ENCODE measurements at regions of chr15 and their contacts with region 1.

Region 1: DNA sequence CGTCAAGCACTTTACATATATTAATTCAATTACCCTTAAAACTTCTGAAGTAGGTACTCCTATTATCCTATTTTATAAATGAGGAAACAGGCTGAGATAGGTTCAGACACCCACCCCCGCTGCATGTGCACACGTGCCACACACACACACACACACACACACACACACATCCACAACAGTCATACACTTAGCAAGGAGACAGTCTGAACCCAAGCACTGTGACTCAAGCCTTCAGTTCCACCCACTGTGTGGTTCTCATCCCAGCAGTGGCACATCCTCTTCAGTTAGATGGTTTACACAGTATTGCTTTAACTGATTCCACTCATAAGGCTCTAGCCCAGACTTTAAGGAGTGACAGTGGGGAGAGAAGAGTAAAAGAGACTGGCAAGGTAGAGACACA is 91.1 kb upstream of the FGF7 start:
- DNase-seq: no peak
- ATAC-seq: no peak
- H3K4me3 ChIP-seq: no peak overlapping the region
- H3K27ac ChIP-seq: no peak overlapping the region
- H3K4me1 ChIP-seq: no peaks in the 10 kb centered on the region
- H3K27me3 ChIP-seq: no peaks in the 10 kb centered on the region
- CTCF ChIP-seq: no peak
- POLR2A ChIP-seq: no peak

Region 2: GRCh38 chr15:49290191-49290590 is 41.8 kb before region 1 on chr15:
- intact Hi-C with region 1: no loop called
- DNase-seq: no peak
- ATAC-seq: peak in 2 of 4 donors; percentile 20 to 71
- H3K4me3 ChIP-seq: no peak overlapping the region
- H3K27ac ChIP-seq: no peak overlapping the region
- H3K4me1 ChIP-seq: peaks cover 0 to 10% (median 0%) of the 10 kb centered on the region in 12 donors
- H3K27me3 ChIP-seq: no peaks in the 10 kb centered on the region
- CTCF ChIP-seq: no peak
- POLR2A ChIP-seq: no peak

Region 3: DNA sequence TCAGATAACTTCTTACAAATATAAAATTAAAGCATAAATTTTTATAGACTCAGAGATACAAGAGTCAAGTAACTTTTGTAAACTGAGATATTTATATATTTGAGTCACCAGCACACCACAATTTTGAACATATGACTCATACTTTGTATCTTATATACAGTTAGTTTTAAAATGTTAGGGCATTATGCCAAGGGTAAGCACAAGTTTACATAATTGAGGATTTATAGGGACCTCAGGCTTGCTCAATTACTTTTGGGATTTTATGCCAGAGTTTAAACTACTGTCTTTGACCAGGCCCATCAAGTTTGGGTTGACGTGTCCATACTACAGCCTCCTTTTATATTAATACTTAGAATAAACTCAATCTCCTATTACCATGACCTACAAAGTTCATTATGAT is 83.7 kb after region 1 on chr15:
- intact Hi-C with region 1: loop called in 1 of 10 experiments (anchors 10 kb)
- DNase-seq: no peak
- ATAC-seq: no peak
- H3K4me3 ChIP-seq: no peak overlapping the region
- H3K27ac ChIP-seq: no peak overlapping the region
- H3K4me1 ChIP-seq: no peaks in the 10 kb centered on the region
- H3K27me3 ChIP-seq: no peaks in the 10 kb centered on the region
- CTCF ChIP-seq: no peak
- POLR2A ChIP-seq: no peak

Measured in heart left ventricle (tissue), 16 donors.